ENCODE measurements at regions of chr20 and their contacts with region 1.

Region 1: DNA sequence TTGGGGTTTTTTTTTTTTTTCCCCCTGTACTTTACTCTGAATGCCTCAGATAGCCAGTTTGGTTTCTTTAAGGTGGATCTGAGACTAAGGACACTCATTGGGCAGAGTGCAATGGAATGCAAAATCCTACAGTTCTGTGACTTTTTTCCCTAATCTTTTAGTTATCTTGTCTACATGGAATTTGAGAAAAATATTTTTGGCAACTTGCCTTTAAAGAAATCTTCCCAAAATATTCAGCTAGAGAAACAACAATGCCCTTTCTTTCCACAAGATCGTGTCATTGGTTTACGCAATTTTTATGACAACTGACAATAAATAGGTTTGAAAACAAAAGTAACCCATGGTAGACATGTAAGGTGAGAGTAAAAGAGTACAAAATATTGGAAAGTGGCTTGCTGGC is 171.7 kb upstream of the LAMP5 start:
- DNase-seq: no peak
- H3K4me3 ChIP-seq: no peak overlapping the region
- H3K27me3 ChIP-seq: no peaks in the 10 kb centered on the region
- CTCF ChIP-seq: no peak

Region 2: DNA sequence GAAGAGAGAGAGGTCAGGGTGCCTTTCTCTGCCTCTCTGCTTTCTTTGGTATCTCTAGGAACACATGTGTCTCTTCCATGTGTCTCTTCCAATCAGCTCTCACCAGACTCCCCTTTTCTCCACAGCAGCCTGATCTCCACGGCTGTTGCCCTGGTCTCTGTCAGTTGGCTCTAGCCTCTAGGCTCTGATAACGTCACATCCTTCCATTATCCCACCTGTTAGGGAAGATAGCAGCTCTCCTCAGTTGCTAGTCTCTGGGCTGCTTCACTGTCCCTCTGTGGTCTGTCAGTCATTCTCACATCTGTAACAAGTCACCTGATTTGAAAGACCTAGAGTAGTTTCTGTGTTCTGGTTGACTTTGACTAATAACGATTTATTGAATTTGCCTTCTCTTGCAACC is 193.5 kb before region 1 on chr20:
- CTCF ChIA-PET with region 1: no interaction called
- POLR2A ChIA-PET with region 1: no interaction called
- DNase-seq: no peak
- H3K4me3 ChIP-seq: no peak overlapping the region
- H3K27me3 ChIP-seq: no peaks in the 10 kb centered on the region
- CTCF ChIP-seq: no peak

Region 3: DNA sequence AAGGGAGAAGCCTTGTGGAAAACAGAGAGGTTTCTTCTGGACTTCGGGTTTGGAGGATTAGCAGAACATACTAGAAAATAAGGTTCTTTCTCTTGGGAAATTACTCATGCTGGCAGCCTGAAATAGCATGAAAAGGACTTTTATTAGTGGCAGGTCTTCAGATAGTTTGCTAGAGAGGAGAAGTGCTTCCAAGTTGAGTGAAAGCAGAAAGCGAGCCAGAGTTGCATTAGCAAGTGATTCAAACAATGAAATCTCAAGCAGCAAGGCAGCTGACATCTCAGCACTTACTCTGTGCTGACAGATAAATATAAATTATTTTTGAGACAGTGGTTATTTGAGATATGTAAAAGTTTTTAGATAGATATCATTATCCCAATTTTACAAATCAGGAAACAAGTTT is 181.9 kb before region 1 on chr20:
- CTCF ChIA-PET with region 1: no interaction called
- POLR2A ChIA-PET with region 1: interaction called, 11 read pairs
- DNase-seq: no peak
- H3K4me3 ChIP-seq: 0 out of 2 replicates have a peak overlapping the region, but pooled peaks have one; percentile 3
- H3K27me3 ChIP-seq: no peaks in the 10 kb centered on the region
- CTCF ChIP-seq: no peak